ENCODE measurements at regions of chr14 and their contacts with region 1.

Region 1: DNA sequence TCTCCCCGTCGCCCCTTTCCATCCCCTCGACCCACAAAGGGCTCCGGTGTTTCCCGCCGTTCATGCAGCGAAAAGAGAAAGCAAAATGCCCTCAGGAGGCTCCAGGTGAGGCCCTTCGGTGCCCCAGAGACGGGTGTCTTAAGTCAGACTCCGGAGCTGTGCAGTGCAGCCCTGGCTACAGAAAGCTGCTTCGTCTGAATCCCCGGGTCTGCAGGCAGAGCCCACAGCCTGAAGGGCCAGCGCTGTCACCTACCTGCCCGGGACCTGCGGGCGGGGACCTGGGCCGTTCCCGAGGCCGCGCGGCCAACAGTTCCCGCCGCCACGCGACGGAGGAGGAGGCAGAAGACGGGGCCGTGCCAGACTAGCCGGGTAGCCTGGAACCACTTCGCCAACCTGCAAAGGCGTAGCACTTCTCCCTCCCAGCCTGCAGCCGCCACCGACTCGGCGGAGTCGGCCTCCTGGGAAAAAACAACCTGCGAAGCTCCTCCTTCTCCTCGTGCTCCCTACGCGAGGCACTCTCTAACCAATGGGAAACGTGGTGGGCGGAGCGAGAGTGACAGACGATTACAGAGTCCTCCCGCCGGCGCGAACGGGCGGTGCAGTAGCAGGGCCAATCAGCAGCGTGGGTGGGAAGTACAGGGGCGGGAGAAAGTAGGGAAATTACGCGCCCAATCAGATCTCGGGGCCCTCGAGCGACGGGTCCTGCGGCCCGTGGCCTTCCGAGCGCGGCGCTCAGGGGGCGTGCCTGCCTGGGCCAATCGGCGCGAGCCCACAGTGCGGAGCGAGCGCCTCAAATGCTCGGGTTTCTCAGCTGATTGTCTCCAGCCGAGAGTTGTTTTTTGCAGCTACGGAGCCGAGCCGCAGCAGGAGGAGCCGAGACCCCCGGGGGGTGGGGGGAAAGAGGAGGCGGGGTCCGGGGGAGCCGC is at the starts of genes GPR137C and TXNDC16:
- DNase-seq: peak; percentile 98 to 99
- H3K4me3 ChIP-seq: peak within 1 kb of the TSS; percentile 74
- H3K4me3 Mint-ChIP-seq: peak within 1 kb of the TSS; percentile 92
- H3K27ac Mint-ChIP-seq: peak within 1 kb of the TSS; percentile 83
- H3K4me1 ChIP-seq: peaks cover 7% of the 10 kb centered on the region; the same call in 1 of the 2 replicates
- H3K4me1 Mint-ChIP-seq: peaks cover 16% of the 10 kb centered on the region
- H3K27me3 ChIP-seq: no peaks in the 10 kb centered on the region
- H3K27me3 Mint-ChIP-seq: no peaks in the 10 kb centered on the region
- CTCF ChIP-seq: no peak
- total RNA-seq, gene GPR137C: 1.9 and 2.9 TPM in 2 replicates
- total RNA-seq, gene TXNDC16: 6.6 and 10.2 TPM in 2 replicates

Region 2: DNA sequence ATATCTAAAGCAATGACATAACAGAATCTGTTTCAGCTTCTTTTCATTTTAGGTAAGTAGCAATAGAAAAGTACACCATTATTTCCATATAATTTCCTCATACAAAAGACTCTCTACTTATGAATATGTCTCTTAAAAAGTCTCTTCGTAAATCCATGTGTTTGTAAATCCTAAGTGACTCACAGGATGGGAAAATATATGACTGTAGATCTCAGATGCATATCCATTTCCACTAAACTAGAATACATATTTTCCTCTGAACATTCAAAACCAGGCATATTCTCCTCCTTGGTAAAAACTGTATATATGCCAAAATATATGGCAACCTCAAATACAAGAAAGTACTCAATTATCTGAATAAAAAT is 93.6 kb before region 1 on chr14:
- CTCF ChIA-PET with region 1: no interaction called
- POLR2A ChIA-PET with region 1: interaction called, 10 read pairs
- intact Hi-C with region 1: no loop called
- DNase-seq: no peak
- H3K4me3 ChIP-seq: no peak overlapping the region
- H3K4me3 Mint-ChIP-seq: no peak overlapping the region
- H3K27ac Mint-ChIP-seq: peak overlapping the region; percentile 86
- H3K4me1 ChIP-seq: peaks cover 9% of the 10 kb centered on the region
- H3K4me1 Mint-ChIP-seq: peaks cover 6% of the 10 kb centered on the region
- H3K27me3 ChIP-seq: no peaks in the 10 kb centered on the region
- H3K27me3 Mint-ChIP-seq: no peaks in the 10 kb centered on the region
- CTCF ChIP-seq: no peak

Region 3: DNA sequence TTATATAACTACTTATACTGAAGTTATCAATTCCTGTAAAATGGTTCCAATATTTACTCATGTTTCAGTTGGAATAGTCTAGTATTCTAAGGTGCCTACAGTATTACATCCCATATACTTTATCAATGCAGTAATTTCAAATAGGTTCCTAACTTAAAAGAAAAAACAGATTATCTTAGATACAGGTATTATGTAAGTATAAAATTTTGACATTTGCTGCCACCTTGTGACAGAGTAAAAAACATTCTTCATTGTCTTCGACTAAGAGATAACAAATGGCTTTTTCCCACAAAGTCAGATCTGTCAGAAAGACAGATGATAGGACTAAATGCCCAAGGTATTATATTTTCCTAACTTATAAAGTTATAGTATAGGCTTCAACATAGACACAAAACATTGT is 78.8 kb before region 1 on chr14:
- CTCF ChIA-PET with region 1: no interaction called
- POLR2A ChIA-PET with region 1: no interaction called
- intact Hi-C with region 1: no loop called
- DNase-seq: peak in 1 of 2 experiments; percentile 22
- H3K4me3 ChIP-seq: no peak overlapping the region
- H3K4me3 Mint-ChIP-seq: no peak overlapping the region
- H3K27ac Mint-ChIP-seq: no peak overlapping the region
- H3K4me1 ChIP-seq: no peaks in the 10 kb centered on the region
- H3K4me1 Mint-ChIP-seq: no peaks in the 10 kb centered on the region
- H3K27me3 ChIP-seq: no peaks in the 10 kb centered on the region
- H3K27me3 Mint-ChIP-seq: no peaks in the 10 kb centered on the region
- CTCF ChIP-seq: peak; percentile 3 to 23

Region 4: GRCh38 chr14:52663850-52664249 is 111.5 kb after region 1 on chr14:
- CTCF ChIA-PET with region 1: no interaction called
- POLR2A ChIA-PET with region 1: no interaction called
- intact Hi-C with region 1: loop called (anchors 10 kb)
- DNase-seq: no peak
- H3K4me3 ChIP-seq: no peak overlapping the region
- H3K4me3 Mint-ChIP-seq: no peak overlapping the region
- H3K27ac Mint-ChIP-seq: no peak overlapping the region
- H3K4me1 ChIP-seq: no peaks in the 10 kb centered on the region
- H3K4me1 Mint-ChIP-seq: no peaks in the 10 kb centered on the region
- H3K27me3 ChIP-seq: no peaks in the 10 kb centered on the region
- H3K27me3 Mint-ChIP-seq: no peaks in the 10 kb centered on the region
- CTCF ChIP-seq: no peak

Region 5: GRCh38 chr14:52695481-52696091 is 143.3 kb after region 1 on chr14 and contains the start of gene ERO1A:
- CTCF ChIA-PET with region 1: no interaction called
- POLR2A ChIA-PET with region 1: no interaction called
- intact Hi-C with region 1: loop called (anchors 10 kb)
- DNase-seq: peak; percentile 81 to 90
- H3K4me3 ChIP-seq: peak within 1 kb of the TSS; percentile 71
- H3K4me3 Mint-ChIP-seq: peak within 1 kb of the TSS; percentile 93
- H3K27ac Mint-ChIP-seq: peak within 1 kb of the TSS; percentile 81
- H3K4me1 ChIP-seq: peaks cover 23% of the 10 kb centered on the region
- H3K4me1 Mint-ChIP-seq: peaks cover 38% of the 10 kb centered on the region
- H3K27me3 ChIP-seq: no peaks in the 10 kb centered on the region
- H3K27me3 Mint-ChIP-seq: no peaks in the 10 kb centered on the region
- CTCF ChIP-seq: no peak
- total RNA-seq, gene ERO1A: 73.6 and 83.4 TPM in 2 replicates